T-cell (primary cell): ENCODE measurements at regions of chr10 and their contacts with region 1.

Region 1: DNA sequence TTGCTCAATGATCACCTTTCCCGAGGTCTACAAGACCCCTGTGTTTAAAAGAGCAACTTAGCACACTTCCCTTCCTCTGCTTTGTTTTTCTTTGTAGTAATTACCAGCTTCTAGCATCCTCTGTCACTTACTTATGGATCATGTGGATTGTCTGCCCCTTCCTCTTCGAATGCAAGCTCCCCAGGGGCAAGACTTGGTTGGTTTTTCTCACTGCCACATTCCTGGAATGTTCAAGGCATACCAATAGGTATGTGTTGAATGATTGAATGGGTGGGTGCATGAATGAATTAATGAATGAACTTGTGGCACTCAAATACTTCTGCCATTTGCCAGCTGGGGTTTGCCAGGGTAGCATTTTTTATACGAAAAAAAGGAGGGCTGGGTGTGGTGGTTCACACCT is 294.0 kb downstream of the PRPF18 start:
- DNase-seq: no peak
- ATAC-seq: no peak
- H3K4me3 ChIP-seq: no peak overlapping the region
- H3K4me3 Mint-ChIP-seq: no peak overlapping the region
- H3K27ac ChIP-seq: no peak overlapping the region
- H3K27ac Mint-ChIP-seq: no peak overlapping the region
- H3K4me1 ChIP-seq: no peaks in the 10 kb centered on the region
- H3K4me1 Mint-ChIP-seq: no peaks in the 10 kb centered on the region
- H3K27me3 ChIP-seq: peaks cover 0 to 19% of the 10 kb centered on the region in 2 experiments
- H3K27me3 Mint-ChIP-seq: peaks cover 5 to 11% of the 10 kb centered on the region in 2 donors

Region 2: GRCh38 chr10:13816195-13816926 is 64.4 kb before region 1 on chr10:
- CTCF ChIA-PET with region 1: no interaction called
- POLR2A ChIA-PET with region 1: no interaction called
- DNase-seq: no peak
- ATAC-seq: no peak
- H3K4me3 ChIP-seq: no peak overlapping the region
- H3K4me3 Mint-ChIP-seq: no peak overlapping the region
- H3K27ac ChIP-seq: no peak overlapping the region
- H3K27ac Mint-ChIP-seq: no peak overlapping the region
- H3K4me1 ChIP-seq: peaks cover 8 to 17% of the 10 kb centered on the region in 2 experiments
- H3K4me1 Mint-ChIP-seq: peaks cover 12 to 21% (median 12%) of the 10 kb centered on the region in 3 donors
- H3K27me3 ChIP-seq: peaks cover 0 to 15% of the 10 kb centered on the region in 2 experiments
- H3K27me3 Mint-ChIP-seq: peaks cover 3 to 4% of the 10 kb centered on the region in 2 donors

Region 3: DNA sequence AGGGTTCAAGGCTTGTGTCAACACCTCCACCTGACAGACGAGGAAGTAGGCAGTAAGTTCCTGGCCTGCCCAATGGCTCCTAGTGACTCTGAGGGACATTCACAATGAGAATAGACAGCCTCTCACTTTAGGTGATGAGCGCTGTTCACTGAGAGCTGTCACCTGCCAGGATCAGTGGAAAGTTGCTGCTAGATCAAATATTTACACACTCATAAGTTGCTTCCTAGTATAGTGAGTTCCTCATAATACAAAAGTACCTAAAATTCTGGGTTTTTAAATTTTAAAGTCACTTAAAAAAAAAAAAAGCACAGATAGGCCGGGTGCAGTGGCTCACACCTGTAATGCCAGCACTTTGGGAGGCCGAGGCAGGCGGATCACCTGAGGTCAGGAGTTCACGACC is 26.8 kb after region 1 on chr10:
- CTCF ChIA-PET with region 1: interaction called in 1 of 2 experiments, 10 read pairs
- POLR2A ChIA-PET with region 1: no interaction called
- DNase-seq: no peak
- ATAC-seq: no peak
- H3K4me3 ChIP-seq: no peak overlapping the region
- H3K4me3 Mint-ChIP-seq: no peak overlapping the region
- H3K27ac ChIP-seq: no peak overlapping the region
- H3K27ac Mint-ChIP-seq: no peak overlapping the region
- H3K4me1 ChIP-seq: no peaks in the 10 kb centered on the region
- H3K4me1 Mint-ChIP-seq: peaks cover 0 to 1% (median 0%) of the 10 kb centered on the region in 3 donors
- H3K27me3 ChIP-seq: no peaks in the 10 kb centered on the region
- H3K27me3 Mint-ChIP-seq: peaks cover 0 to 2% of the 10 kb centered on the region in 2 donors

Region 4: GRCh38 chr10:14604181-14605142 is 723.7 kb after region 1 on chr10:
- CTCF ChIA-PET with region 1: no interaction called
- POLR2A ChIA-PET with region 1: no interaction called
- DNase-seq: peak in 34 of 35 experiments; percentile 22 to 83 (median 58)
- ATAC-seq: peak; percentile 70 to 79 (median 74)
- H3K4me3 ChIP-seq: peak overlapping the region; percentile 69 to 72
- H3K4me3 Mint-ChIP-seq: peak overlapping the region; percentile 94 to 99 (median 94)
- H3K27ac ChIP-seq: peak overlapping the region; percentile 73
- H3K27ac Mint-ChIP-seq: peak overlapping the region; percentile 93
- H3K4me1 ChIP-seq: peaks cover 22 to 43% of the 10 kb centered on the region in 2 experiments
- H3K4me1 Mint-ChIP-seq: peaks cover 49 to 67% (median 61%) of the 10 kb centered on the region in 3 donors
- H3K27me3 ChIP-seq: no peaks in the 10 kb centered on the region
- H3K27me3 Mint-ChIP-seq: no peaks in the 10 kb centered on the region